Activated B cell treated with CpG ODN at 0.5 μM for 24 hours (primary cell): ENCODE measurements at regions of chr11 and their contacts with region 1.

Region 1: GRCh38 chr11:3412837-3413236 is 33.9 kb upstream of the ZNF195 start:
- DNase-seq: no peak
- ATAC-seq: no peak
- H3K4me3 Mint-ChIP-seq: no peak overlapping the region
- H3K27ac Mint-ChIP-seq: no peak overlapping the region
- H3K4me1 Mint-ChIP-seq: peaks cover 5% of the 10 kb centered on the region
- H3K27me3 Mint-ChIP-seq: no peaks in the 10 kb centered on the region
- CTCF ChIP-seq: no peak

Region 2: DNA sequence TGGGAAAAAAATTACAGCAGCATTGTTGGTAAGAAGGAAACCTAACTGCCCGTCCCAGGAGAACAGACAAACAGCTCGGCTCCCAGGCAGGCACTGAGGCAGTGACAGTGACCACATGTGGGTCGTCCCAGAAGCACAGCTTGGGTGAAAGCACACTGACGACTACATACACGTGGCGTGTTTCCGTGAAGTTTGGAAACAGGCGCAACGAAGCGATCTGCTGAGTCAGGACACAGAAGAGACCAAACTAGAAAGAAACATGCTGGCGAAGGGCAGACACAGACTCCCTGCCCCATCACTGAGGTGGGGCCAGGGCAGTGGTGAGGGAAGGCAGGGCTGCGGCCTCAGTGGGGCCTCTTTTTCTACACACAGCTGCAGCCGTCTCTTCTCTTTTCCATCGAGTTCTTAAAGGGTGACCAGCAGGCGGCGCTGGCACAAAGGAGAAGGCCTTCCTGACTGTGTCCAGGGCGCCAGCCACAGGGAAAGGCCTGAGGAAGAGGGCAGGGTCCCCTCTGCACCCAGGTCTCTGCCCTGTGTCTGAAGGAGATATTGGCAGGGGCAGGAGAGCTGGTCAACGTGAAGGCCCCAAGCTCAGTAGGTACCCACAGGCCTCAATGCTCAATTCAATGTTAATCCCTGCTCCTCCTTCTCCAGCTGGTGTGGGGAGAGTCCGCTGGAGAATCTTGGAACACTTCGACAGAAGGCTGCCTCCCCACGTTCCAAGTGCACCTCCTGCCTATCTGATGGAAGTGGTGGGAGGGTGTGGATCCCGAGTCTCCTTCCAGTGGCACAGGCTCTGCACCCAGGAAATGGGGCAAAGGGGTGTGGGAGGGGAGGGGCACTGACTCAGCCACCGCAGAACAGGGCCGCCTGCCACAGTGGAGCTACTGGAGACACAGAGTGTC is 375.5 kb before region 1 on chr11:
- CTCF ChIA-PET with region 1: interaction called, 5 read pairs
- POLR2A ChIA-PET with region 1: no interaction called
- intact Hi-C with region 1: loop called (anchors 10 kb)
- DNase-seq: peak; percentile 40
- ATAC-seq: peak; percentile 48
- H3K4me3 Mint-ChIP-seq: no peak overlapping the region
- H3K27ac Mint-ChIP-seq: peak overlapping the region; percentile 70
- H3K4me1 Mint-ChIP-seq: peaks cover 32% of the 10 kb centered on the region
- H3K27me3 Mint-ChIP-seq: no peaks in the 10 kb centered on the region
- CTCF ChIP-seq: no peak

Region 3: GRCh38 chr11:3341298-3341697 is 71.5 kb before region 1 on chr11:
- CTCF ChIA-PET with region 1: interaction called, 8 read pairs
- POLR2A ChIA-PET with region 1: no interaction called
- intact Hi-C with region 1: loop called (anchors 10 kb)
- DNase-seq: no peak
- ATAC-seq: no peak
- H3K4me3 Mint-ChIP-seq: no peak overlapping the region
- H3K27ac Mint-ChIP-seq: no peak overlapping the region
- H3K4me1 Mint-ChIP-seq: no peaks in the 10 kb centered on the region
- H3K27me3 Mint-ChIP-seq: peaks cover 30% of the 10 kb centered on the region
- CTCF ChIP-seq: no peak

Region 4: DNA sequence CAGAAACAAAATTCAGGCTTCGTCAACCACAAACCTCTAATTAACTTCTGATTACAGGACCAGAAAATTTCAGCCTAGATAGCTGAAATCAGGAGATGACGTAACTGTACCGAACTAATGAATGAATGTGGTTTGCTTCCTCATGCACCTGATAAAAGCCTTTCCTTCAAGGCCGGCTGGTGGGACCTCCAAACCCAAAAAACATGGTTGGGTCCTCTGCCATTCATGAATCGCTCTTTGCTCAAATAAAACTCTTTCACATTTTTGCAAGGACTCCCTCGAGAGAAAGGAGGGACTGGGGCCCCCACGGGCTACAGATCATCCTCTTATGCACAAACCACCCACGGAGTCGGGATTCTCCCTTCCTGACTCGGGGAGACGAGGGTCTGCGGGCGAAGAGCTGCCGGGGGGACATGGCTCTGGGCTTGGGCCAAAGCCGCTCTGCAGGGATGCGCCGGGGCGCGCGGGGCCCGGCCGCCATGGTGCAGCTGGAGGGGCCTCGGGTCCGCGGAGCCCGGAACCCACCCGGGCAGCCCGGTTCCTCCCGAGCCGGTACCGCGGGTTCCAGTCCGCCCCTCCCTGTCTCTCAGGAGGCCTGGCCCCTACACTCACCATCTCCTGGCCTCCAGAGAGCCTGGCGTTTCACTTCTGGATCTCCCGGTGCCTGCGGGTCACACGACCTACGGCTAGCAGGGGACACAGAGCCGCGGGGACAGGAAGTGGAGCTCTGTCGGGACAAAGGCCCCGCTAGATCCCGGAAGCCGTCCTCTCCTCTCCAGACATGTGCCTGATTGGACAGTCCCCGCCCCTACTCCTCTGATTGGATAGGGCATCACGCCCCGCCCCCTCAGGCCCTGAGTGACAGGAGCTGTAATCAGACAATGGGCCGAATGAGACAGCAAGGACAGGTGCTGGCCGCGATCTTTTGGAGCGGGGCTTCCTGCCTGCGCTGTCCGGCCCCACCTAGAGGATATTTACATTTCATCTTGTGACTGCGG is 34.1 kb before region 1 on chr11 and contains the start of gene ZNF195:
- CTCF ChIA-PET with region 1: interaction called, 4 read pairs
- POLR2A ChIA-PET with region 1: no interaction called
- intact Hi-C with region 1: loop called (anchors 2 kb)
- DNase-seq: peak; percentile 95
- ATAC-seq: peak; percentile 99
- H3K4me3 Mint-ChIP-seq: peak within 1 kb of the TSS; percentile 99
- H3K27ac Mint-ChIP-seq: peak within 1 kb of the TSS; percentile 96
- H3K4me1 Mint-ChIP-seq: peaks cover 45% of the 10 kb centered on the region
- H3K27me3 Mint-ChIP-seq: no peaks in the 10 kb centered on the region
- CTCF ChIP-seq: no peak
- total RNA-seq, gene ZNF195: 48.3 and 54.8 TPM in 2 replicates